ENCODE measurements at regions of chr4 and their contacts with region 1.

Region 1: GRCh38 chr4:36351082-36351666 is 69.8 kb downstream of the DTHD1 start:
- DNase-seq: peak; percentile 85
- ATAC-seq: peak; percentile 69
- H3K4me3 Mint-ChIP-seq: no peak overlapping the region
- H3K27ac Mint-ChIP-seq: no peak overlapping the region
- H3K4me1 Mint-ChIP-seq: peaks cover 24% of the 10 kb centered on the region
- H3K27me3 Mint-ChIP-seq: peaks cover 3% of the 10 kb centered on the region

Region 2: DNA sequence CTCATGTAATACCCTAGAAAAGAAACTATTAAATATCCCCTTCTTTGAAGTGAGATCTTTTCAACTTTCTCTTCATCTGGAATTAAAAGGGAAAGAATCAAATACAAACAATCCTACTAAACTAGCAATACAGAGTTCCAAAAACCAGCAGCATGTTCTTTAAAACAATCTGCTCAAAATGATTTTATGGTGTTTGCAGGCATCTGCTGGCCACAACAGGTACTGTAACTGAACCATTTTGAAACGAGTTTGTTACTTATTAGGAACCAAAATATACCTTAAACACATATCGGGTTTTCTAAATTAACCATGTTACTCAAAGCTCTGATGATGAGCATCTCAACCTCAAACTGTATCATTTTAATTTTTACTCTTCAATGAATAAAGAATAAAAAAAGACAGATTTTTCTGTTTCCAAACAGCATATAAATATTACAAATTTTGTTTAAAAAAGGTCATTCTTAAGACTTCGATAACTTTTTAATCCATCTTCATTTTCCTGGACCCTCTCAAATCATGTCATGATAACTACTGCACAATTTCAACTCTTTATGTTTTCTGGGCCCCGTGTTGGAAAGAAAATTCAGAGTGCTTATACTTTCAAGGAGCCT is 163.3 kb before region 1 on chr4:
- CTCF ChIA-PET with region 1: interaction called, 11 read pairs
- POLR2A ChIA-PET with region 1: no interaction called
- DNase-seq: peak; percentile 38
- ATAC-seq: no peak
- H3K4me3 Mint-ChIP-seq: no peak overlapping the region
- H3K27ac Mint-ChIP-seq: no peak overlapping the region
- H3K4me1 Mint-ChIP-seq: peaks cover 46% of the 10 kb centered on the region
- H3K27me3 Mint-ChIP-seq: no peaks in the 10 kb centered on the region

Region 3: DNA sequence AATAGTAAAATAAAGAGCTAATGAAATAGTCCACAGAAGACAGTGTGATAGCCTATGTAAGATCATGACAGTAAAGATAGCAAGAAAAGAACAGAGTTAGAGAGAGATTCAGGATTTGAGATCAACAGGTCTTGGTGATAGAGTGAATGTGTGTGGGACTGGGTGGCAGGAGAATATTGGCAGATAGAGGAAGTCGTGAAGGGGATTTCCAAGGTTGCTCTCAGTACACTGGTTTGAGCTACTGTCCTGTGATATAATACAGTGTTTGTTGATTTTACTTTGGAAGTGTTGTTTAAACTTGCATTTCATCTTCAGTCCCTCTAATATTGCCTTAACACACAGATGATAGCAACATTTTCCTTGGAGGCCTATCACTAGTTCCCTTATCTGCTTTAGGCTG is 25.7 kb before region 1 on chr4:
- CTCF ChIA-PET with region 1: interaction called, 12 read pairs
- POLR2A ChIA-PET with region 1: no interaction called
- DNase-seq: no peak
- ATAC-seq: peak; percentile 32
- H3K4me3 Mint-ChIP-seq: no peak overlapping the region
- H3K27ac Mint-ChIP-seq: peak overlapping the region; percentile 5
- H3K4me1 Mint-ChIP-seq: peaks cover 60% of the 10 kb centered on the region
- H3K27me3 Mint-ChIP-seq: no peaks in the 10 kb centered on the region

Region 4: GRCh38 chr4:36332023-36332781 is 19.0 kb before region 1 on chr4:
- CTCF ChIA-PET with region 1: interaction called, 15 read pairs
- POLR2A ChIA-PET with region 1: interaction called, 4 read pairs
- DNase-seq: no peak
- ATAC-seq: no peak
- H3K4me3 Mint-ChIP-seq: no peak overlapping the region
- H3K27ac Mint-ChIP-seq: no peak overlapping the region
- H3K4me1 Mint-ChIP-seq: peaks cover 26% of the 10 kb centered on the region
- H3K27me3 Mint-ChIP-seq: no peaks in the 10 kb centered on the region